A549 (cell line): ENCODE measurements at regions of chr12 and their contacts with region 1.

Region 1: GRCh38 chr12:55738123-55739024 is 4.5 kb upstream of the GDF11 start:
- DNase-seq: peak; percentile 56 to 79
- ATAC-seq: peak; percentile 52 to 81
- H3K4me3 ChIP-seq: peak overlapping the region; percentile 45
- H3K27ac ChIP-seq: peak overlapping the region; percentile 40 to 72; a peak in 5 of 6 replicates
- H3K4me1 ChIP-seq: peaks cover 11% of the 10 kb centered on the region; the same call in 2 of the 3 replicates
- CTCF ChIP-seq: peak; percentile 95
- EP300 ChIP-seq: no peak
- POLR2A ChIP-seq: no peak
- RAD21 ChIP-seq: peak; percentile 91 to 96

Region 2: GRCh38 chr12:55771736-55772135 is 33.4 kb after region 1 on chr12:
- CTCF ChIA-PET with region 1: interaction called, 20 read pairs
- POLR2A ChIA-PET with region 1: no interaction called
- DNase-seq: no peak
- ATAC-seq: no peak
- H3K4me3 ChIP-seq: no peak overlapping the region
- H3K27ac ChIP-seq: no peak overlapping the region
- H3K4me1 ChIP-seq: no peaks in the 10 kb centered on the region
- CTCF ChIP-seq: no peak
- EP300 ChIP-seq: no peak
- POLR2A ChIP-seq: no peak
- RAD21 ChIP-seq: no peak

Region 3: DNA sequence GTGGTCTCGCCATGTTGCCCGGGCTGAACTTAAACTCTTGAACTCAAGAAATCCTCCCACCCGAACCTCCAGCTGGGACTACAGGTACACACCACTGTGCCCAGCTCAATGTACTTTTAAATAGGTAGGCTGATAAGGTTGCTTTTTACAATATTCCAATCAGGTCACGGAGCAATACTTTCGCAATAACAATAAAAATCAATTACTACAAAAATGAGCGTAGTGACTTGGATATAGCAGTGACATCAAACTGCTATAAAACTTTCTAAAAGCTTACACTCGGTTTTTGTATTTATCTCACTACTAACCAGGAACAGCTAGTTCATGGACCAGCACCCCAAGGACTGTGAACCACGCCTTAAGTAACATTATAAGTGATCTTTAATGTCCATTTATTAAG is 68.6 kb after region 1 on chr12:
- CTCF ChIA-PET with region 1: interaction called, 25 read pairs
- POLR2A ChIA-PET with region 1: no interaction called
- DNase-seq: no peak
- ATAC-seq: no peak
- H3K4me3 ChIP-seq: no peak overlapping the region
- H3K27ac ChIP-seq: no peak overlapping the region
- H3K4me1 ChIP-seq: no peaks in the 10 kb centered on the region
- CTCF ChIP-seq: no peak
- EP300 ChIP-seq: no peak
- POLR2A ChIP-seq: no peak
- RAD21 ChIP-seq: no peak

Region 4: GRCh38 chr12:55926738-55927587 is 188.6 kb after region 1 on chr12:
- CTCF ChIA-PET with region 1: interaction called, 13 read pairs
- POLR2A ChIA-PET with region 1: no interaction called
- DNase-seq: peak; percentile 97
- ATAC-seq: peak; percentile 80 to 86
- H3K4me3 ChIP-seq: peak overlapping the region; percentile 89
- H3K27ac ChIP-seq: peak overlapping the region; percentile 94 to 96
- H3K4me1 ChIP-seq: peaks cover 33% of the 10 kb centered on the region
- CTCF ChIP-seq: peak; percentile 94
- EP300 ChIP-seq: no peak; a peak in 1 of 5 replicates
- POLR2A ChIP-seq: peak; percentile 62
- RAD21 ChIP-seq: peak; percentile 14 to 43; a peak in 2 of 5 replicates

Region 5: GRCh38 chr12:56020423-56021184 is 282.2 kb after region 1 on chr12 and contains the start of gene IKZF4:
- CTCF ChIA-PET with region 1: interaction called, 13 read pairs
- POLR2A ChIA-PET with region 1: no interaction called
- DNase-seq: no peak
- ATAC-seq: peak in 1 of 2 experiments; percentile 24; a peak in 3 of 6 replicates
- H3K4me3 ChIP-seq: no peak within 1 kb of the TSS
- H3K27ac ChIP-seq: no peak within 1 kb of the TSS
- H3K4me1 ChIP-seq: no peaks in the 10 kb centered on the region
- CTCF ChIP-seq: no peak
- EP300 ChIP-seq: no peak
- POLR2A ChIP-seq: no peak
- RAD21 ChIP-seq: no peak
- polyA plus RNA-seq, gene IKZF4: 2.0 and 2.9 TPM in 2 replicates